ACHN (cell line): ENCODE measurements at regions of chr17 and their contacts with region 1.

Region 1: DNA sequence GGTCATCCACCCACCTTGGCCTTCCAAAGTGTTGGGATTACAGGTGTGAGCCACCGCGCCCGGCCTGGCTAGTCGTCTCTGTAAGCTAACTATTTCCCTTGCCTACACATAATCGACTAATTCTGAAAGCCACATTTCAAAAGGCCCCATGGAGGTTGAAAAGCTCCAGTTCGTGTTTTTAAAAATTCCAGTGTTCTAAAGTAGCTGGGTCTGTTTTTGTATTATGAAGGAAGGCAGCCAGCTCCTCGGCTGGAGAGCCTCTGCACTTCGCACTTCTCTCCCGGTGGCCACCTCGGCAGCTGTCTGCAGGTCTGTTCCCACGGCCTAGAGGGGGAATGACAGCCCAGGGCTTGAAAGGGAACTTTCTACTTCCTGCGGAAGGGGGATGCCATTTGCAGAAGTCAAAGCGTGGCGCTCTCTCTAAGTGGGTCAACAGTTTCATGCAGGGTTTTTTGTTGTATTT is 16.9 kb downstream of the HASPIN start:
- DNase-seq: no peak

Region 2: GRCh38 chr17:3636154-3636907 is 104.3 kb before region 1 on chr17 and contains the starts of genes CTNS and SHPK:
- in situ Hi-C with region 1: no loop called
- DNase-seq: peak; percentile 98

Region 3: GRCh38 chr17:3802461-3803307 is 62.0 kb after region 1 on chr17:
- in situ Hi-C with region 1: loop called (anchors 10 kb)
- DNase-seq: peak; percentile 85

Region 4: DNA sequence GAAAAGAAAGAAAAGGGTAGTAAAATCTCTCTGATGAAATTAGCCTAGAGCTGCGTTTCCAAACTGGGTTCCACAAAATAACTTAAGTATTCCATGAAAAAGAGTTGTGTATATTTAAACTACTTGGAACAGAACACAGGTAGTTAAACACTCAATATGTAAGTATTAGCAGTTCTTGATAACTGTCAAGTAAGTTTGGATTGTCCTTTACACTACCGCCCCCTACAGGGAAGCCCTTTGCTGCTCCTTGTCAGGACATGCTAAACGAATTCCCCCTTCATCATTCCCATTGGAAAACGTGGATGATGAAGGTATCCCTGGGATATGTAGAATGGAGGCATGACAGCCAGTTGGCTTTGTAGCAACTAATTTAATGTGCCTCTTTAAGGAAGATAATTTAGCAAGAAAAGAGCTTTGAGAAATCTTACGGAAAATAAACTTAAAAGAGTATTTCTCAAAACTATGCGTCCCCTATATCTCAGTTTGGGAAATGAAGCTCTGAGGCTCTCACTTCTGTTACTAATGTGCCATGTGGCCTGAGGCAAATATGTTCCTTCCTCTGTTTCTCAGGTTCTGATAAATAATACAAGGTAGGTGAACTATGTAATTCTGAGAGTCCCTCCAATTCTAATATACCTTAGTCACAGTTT is 86.6 kb after region 1 on chr17:
- in situ Hi-C with region 1: no loop called
- DNase-seq: peak; percentile 85

Region 5: GRCh38 chr17:3976649-3977171 is 236.1 kb after region 1 on chr17:
- in situ Hi-C with region 1: no loop called
- DNase-seq: no peak